ENCODE measurements at regions of chr17 and their contacts with region 1.

Region 1: DNA sequence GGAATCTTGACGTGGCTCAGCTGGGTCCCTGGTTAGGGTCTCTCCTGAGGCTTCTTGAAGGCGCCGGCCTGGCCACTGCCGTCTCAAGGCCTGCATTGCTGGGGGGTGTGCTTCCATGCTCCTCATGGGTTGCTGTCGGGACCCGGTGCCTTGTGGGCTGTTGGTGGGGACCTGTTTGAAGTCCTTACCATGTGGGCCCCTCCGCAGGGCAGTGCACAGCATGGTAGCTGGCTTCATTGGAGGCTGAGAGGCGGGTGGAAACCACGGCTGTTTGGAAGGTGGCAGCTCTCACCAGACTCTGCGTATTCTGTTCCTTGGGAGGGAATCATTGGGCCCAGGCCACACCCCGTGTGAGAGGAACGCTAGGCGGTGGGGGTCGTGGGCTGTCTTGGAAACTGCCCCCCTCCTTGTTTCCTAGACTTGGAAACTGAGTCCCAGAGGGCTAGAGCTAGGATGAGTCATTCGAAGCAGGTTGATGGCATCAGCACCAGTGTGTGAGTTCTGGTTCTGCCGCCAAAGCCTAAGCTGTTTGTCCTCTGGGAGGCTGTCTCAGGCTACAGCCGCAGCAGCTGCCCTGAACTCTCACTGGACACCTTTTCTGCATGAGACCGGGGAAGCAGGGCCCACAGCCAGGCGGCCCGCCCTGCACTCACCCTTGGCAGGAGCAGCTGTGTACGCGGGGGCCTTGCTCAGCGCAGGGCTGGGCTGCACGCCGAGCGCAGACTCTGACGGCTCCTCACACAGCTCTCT is 35.2 kb downstream of the ZNF750 start:
- DNase-seq: peak; percentile 80 to 90
- ATAC-seq: peak; percentile 89
- H3K4me3 ChIP-seq: no peak overlapping the region
- H3K27ac ChIP-seq: no peak overlapping the region
- H3K4me1 ChIP-seq: no peaks in the 10 kb centered on the region
- H3K27me3 ChIP-seq: no peaks in the 10 kb centered on the region

Region 2: GRCh38 chr17:82781894-82782274 is 22.7 kb before region 1 on chr17:
- intact Hi-C with region 1: no loop called
- DNase-seq: peak; percentile 87 to 94
- ATAC-seq: peak; percentile 95
- H3K4me3 ChIP-seq: no peak overlapping the region
- H3K27ac ChIP-seq: no peak overlapping the region
- H3K4me1 ChIP-seq: no peaks in the 10 kb centered on the region
- H3K27me3 ChIP-seq: no peaks in the 10 kb centered on the region

Region 3: DNA sequence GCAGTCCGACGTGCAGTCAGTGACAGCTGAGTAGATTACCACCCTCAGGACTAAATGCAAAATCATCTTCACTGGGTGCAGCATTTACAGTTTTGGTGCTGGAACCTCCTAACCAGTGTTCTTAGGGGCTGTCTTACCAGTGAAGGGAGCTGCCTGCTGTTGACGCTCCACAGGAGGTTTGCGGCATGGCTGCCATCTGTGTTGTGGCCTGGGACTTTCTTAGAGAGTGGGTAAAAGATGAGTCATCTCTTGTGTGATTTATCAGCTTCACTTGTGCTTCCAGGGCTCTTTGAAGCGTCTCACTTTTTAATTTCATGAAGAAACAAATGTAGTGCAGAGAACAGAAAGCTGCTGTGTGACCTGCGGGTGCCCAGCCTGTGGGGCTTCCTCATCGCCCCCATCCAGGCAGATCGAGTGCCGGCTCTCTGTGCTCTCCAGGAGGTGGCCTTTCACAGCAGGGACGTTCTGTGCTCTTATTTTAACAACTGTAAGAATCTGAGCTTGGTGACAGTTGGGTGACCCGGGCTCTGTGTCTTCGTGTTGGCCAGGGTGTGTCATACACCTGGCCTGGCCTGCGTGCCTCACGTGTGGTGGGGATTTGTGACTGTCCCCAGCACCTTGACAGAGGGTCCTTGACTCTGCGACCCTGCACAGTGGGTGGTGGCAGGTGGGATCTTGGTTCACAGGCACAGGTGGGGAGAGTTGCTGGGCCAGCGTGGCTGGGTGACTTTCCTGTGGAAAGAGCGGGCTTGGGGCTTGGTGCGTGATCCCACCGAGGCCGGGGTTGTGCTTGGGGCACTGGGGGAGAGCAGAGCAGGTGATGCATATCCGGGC is 59.5 kb after region 1 on chr17:
- intact Hi-C with region 1: loop called in 1 of 2 experiments (anchors 10 kb)
- DNase-seq: peak in 1 of 2 donors; percentile 67
- ATAC-seq: no peak
- H3K4me3 ChIP-seq: no peak overlapping the region
- H3K27ac ChIP-seq: no peak overlapping the region
- H3K4me1 ChIP-seq: no peaks in the 10 kb centered on the region
- H3K27me3 ChIP-seq: no peaks in the 10 kb centered on the region

Measured in aorta (tissue), 5 donors.